ENCODE measurements at regions of chr19 and their contacts with region 1.

Region 1: GRCh38 chr19:7943444-7944176 is at the start of gene TIMM44:
- DNase-seq: peak; percentile 99
- H3K4me3 Mint-ChIP-seq: peak within 1 kb of the TSS; percentile 92
- H3K27ac Mint-ChIP-seq: peak within 1 kb of the TSS; percentile 98
- H3K4me1 Mint-ChIP-seq: peaks cover 38% of the 10 kb centered on the region
- H3K27me3 Mint-ChIP-seq: no peaks in the 10 kb centered on the region
- total RNA-seq, gene TIMM44: 66.5 to 68.5 TPM

Region 2: GRCh38 chr19:7562646-7563393 is 380.8 kb before region 1 on chr19:
- CTCF ChIA-PET with region 1: interaction called, 13 read pairs
- POLR2A ChIA-PET with region 1: no interaction called
- intact Hi-C with region 1: no loop called
- DNase-seq: no peak
- H3K4me3 Mint-ChIP-seq: no peak overlapping the region
- H3K27ac Mint-ChIP-seq: no peak overlapping the region
- H3K4me1 Mint-ChIP-seq: no peaks in the 10 kb centered on the region
- H3K27me3 Mint-ChIP-seq: no peaks in the 10 kb centered on the region

Region 3: DNA sequence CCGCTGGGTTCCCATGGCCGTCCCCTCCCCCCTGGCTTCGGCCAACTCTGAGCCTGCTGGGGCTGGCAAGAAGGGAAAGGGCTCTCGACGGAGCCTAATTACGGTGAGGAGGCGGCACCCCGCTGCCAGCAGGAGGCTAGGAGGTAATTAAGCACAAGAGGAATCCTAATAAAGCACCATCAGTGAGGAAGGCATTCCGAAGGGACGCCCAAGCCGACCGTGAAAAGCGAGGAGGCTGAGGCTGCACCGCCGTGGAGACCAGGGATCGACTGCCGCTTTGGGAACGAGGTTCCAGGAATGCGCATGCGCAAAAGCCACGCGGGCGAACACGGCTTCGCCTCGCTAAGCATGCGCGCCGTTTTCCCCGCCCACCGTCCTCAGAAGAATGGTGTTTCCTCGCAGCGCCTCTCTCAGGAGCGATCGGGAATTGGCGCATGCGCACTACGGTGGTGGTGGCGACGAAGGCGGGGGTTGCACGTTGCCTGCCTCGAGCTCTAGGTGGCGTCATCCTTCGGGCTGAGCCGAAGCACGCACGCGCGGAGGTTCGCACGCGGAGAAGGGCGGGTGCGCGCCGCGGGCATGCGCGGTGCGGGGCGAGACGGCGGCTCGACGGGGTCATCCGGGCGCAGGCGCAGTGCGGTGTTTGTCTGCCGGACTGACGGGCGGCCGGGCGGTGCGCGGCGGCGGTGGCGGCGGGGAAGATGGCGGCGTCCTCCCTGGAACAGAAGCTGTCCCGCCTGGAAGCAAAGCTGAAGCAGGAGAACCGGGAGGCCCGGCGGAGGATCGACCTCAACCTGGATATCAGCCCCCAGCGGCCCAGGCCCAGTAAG is 40.2 kb before region 1 on chr19 and contains the start of gene MAP2K7:
- CTCF ChIA-PET with region 1: interaction called, 8 read pairs
- POLR2A ChIA-PET with region 1: interaction called, 10 read pairs
- intact Hi-C with region 1: loop called (anchors 1 kb)
- DNase-seq: peak; percentile 100
- H3K4me3 Mint-ChIP-seq: peak within 1 kb of the TSS; percentile 86
- H3K27ac Mint-ChIP-seq: peak within 1 kb of the TSS; percentile 93
- H3K4me1 Mint-ChIP-seq: peaks cover 21% of the 10 kb centered on the region
- H3K27me3 Mint-ChIP-seq: peaks cover 3% of the 10 kb centered on the region
- total RNA-seq, gene MAP2K7: 29.1 to 30.1 TPM

Region 4: DNA sequence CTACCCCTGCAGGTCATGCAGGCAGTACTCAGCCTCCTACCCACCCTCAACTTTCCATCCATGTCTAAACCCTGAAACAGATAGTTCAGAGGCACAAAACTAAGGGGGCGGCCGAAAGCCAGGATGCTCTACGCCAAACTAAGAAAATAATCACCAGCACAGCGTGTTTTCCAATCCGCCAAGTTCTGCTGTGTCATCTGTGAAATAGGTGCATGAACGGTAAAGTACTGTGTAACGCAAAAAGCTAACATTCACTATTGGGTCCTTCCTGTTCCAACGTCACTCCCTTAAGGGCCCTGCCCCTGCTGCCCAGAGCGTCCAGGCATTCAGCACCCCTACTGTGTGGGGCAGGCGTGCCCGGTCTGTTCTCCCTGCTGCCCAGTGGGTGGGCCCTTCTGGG is 12.1 kb after region 1 on chr19:
- CTCF ChIA-PET with region 1: interaction called, 13 read pairs
- POLR2A ChIA-PET with region 1: interaction called, 5 read pairs
- intact Hi-C with region 1: no loop called
- DNase-seq: no peak
- H3K4me3 Mint-ChIP-seq: no peak overlapping the region
- H3K27ac Mint-ChIP-seq: no peak overlapping the region
- H3K4me1 Mint-ChIP-seq: no peaks in the 10 kb centered on the region
- H3K27me3 Mint-ChIP-seq: no peaks in the 10 kb centered on the region

Region 5: DNA sequence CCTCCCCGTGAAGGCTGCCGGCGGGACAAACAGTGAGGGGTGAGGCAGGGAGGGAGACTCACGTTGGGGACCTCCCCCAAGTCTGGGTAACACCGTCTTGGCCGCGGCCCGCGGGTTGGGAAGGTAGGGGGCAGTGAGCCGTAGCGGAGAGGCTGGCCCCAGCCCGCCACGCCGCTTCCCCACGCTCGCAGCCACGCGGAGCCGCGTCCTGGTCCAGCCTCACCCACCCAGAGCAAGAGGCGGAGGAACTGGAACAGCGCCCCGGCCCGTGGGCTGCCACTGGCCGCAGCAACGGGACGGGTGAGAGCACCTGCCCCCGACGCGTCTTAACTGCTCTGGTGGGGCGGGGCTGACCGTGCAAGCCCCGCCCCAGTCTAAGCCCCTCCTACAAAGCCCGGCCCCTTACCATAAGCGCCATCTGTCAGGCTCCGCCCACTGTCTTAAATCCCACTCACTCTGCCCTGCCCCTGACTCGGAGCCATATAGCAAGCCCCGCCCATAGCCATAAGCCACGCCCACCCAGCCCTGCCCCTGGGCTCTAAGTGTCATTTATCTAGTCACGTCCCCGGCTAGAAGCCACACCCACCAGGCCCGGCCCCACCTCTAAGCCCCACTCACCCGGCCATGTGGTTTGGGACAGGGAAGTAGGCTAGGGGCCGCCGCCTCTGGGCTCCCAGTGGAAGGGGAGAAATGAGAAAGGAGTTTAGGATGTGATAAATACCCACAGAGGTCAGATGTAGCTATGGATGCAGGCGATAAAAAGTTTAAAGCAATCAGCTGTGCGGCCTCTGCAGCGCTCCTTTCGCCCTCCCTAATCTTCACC is 106.9 kb after region 1 on chr19:
- CTCF ChIA-PET with region 1: interaction called, 3 read pairs
- POLR2A ChIA-PET with region 1: no interaction called
- intact Hi-C with region 1: loop called (anchors 5 kb)
- DNase-seq: peak; percentile 95
- H3K4me3 Mint-ChIP-seq: peak overlapping the region; percentile 37
- H3K27ac Mint-ChIP-seq: no peak overlapping the region
- H3K4me1 Mint-ChIP-seq: peaks cover 5% of the 10 kb centered on the region
- H3K27me3 Mint-ChIP-seq: no peaks in the 10 kb centered on the region

Region 6: DNA sequence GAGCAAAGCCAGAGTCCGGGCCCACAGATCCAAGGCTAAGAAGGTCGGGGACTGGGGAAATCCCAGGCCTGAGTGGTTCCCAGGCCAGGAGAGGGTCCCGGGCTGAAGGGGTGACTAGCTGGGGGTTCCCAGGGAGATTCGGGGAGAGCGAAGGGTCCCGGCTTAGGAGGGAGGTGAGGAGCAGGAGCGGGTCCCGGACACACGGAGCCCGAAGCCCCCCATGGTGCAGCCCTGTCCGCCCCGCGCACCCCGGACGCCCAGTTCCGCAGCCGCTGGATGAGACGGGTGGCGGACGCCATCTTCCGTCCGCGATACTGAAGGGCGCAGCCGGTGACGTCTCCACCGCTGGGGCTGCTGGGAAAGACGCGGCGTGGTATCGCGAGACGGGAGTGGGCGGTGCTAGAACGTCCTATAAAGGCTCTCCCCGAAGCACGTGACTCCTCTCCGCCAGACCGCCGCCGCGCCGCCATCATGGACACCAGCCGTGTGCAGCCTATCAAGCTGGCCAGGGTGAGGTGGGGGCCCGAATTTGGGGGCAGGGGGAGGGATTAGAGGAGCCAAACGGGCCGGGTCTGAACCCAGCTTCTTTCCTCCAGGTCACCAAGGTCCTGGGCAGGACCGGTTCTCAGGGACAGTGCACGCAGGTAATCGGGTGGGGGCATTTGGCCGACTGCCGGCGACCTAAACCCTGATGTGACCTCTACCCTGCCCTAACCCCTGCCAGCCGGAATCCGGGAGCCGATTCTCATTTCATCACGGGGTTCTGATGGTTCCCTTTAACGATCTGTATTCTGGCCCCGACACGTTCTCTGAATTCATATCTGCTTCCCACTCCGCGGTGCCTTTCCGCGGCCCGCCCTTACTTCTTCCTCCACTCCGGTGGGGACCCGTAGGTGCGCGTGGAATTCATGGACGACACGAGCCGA is 377.7 kb after region 1 on chr19 and contains the starts of genes NDUFA7 and RPS28:
- CTCF ChIA-PET with region 1: no interaction called
- POLR2A ChIA-PET with region 1: interaction called, 4 read pairs
- intact Hi-C with region 1: loop called (anchors 1 kb)
- DNase-seq: peak; percentile 99
- H3K4me3 Mint-ChIP-seq: peak within 1 kb of the TSS; percentile 99
- H3K27ac Mint-ChIP-seq: peak within 1 kb of the TSS; percentile 91
- H3K4me1 Mint-ChIP-seq: peaks cover 33% of the 10 kb centered on the region
- H3K27me3 Mint-ChIP-seq: no peaks in the 10 kb centered on the region
- total RNA-seq, gene NDUFA7: 84.2 to 85.1 TPM
- total RNA-seq, gene RPS28: 2,068 to 2,091 TPM

Measured in activated CD4-positive, alpha-beta memory T cell treated with anti-CD3 and anti-CD28 coated beads for 36 hours (primary cell).